ENCODE measurements at regions of chr22 and their contacts with region 1.

Region 1: GRCh38 chr22:30089655-30089974 is 9.4 kb downstream of the HORMAD2 start:
- DNase-seq: no peak
- ATAC-seq: no peak
- H3K4me3 ChIP-seq: no peak overlapping the region
- H3K27ac ChIP-seq: no peak overlapping the region
- H3K4me1 ChIP-seq: no peaks in the 10 kb centered on the region
- H3K27me3 ChIP-seq: no peaks in the 10 kb centered on the region
- CTCF ChIP-seq: no peak
- EP300 ChIP-seq: no peak
- POLR2A ChIP-seq: no peak
- RAD21 ChIP-seq: no peak

Region 2: GRCh38 chr22:29587938-29588699 is 501.5 kb before region 1 on chr22:
- CTCF ChIA-PET with region 1: interaction called, 14 read pairs
- POLR2A ChIA-PET with region 1: no interaction called
- RAD21 ChIA-PET with region 1: interaction called, 7 read pairs
- SMC1A ChIA-PET with region 1: interaction called, 4 read pairs
- in situ Hi-C with region 1: no loop called
- intact Hi-C with region 1: loop called (anchors 1 kb)
- DNase-seq: no peak
- ATAC-seq: peak; percentile 19; the same call in 1 of the 3 replicates
- H3K4me3 ChIP-seq: no peak overlapping the region
- H3K27ac ChIP-seq: no peak overlapping the region
- H3K4me1 ChIP-seq: no peaks in the 10 kb centered on the region
- H3K27me3 ChIP-seq: no peaks in the 10 kb centered on the region
- CTCF ChIP-seq: no peak
- EP300 ChIP-seq: no peak
- POLR2A ChIP-seq: no peak
- RAD21 ChIP-seq: no peak

Region 3: DNA sequence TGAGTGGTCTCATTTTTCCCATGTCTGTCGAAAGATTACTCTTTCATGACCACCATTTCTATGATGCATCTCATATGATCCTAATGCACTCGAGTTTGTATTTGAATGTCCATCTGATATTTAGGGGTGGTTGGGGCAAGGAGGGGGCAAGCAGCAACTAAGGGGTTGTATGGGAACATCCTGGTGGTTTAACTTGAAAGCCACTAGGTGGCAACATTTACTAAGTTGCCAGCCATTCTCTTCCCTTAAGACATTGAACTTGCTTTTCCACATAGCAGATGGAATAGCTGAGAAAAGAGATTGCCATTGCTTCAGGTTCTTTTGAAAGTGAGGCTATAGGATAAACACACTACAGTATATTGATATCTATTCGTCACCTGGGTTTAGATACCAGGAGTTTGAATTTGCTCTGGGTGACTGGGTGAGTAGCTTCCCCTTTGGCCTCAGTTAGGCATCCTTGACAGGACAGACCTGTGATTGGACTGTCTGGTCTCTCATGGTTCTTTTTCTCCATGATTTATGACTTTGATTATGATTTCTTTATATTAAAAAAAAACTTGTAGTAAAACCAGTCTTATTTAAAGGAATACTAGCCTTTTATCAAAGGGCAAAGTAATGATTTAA is 453.8 kb before region 1 on chr22:
- CTCF ChIA-PET with region 1: interaction called, 24 read pairs
- POLR2A ChIA-PET with region 1: no interaction called
- RAD21 ChIA-PET with region 1: interaction called, 23 read pairs
- SMC1A ChIA-PET with region 1: interaction called, 16 read pairs
- in situ Hi-C with region 1: no loop called
- intact Hi-C with region 1: loop called (anchors 1 kb)
- DNase-seq: peak; percentile 23
- ATAC-seq: peak; percentile 78
- H3K4me3 ChIP-seq: no peak overlapping the region
- H3K27ac ChIP-seq: no peak overlapping the region
- H3K4me1 ChIP-seq: peaks cover 11% of the 10 kb centered on the region
- H3K27me3 ChIP-seq: no peaks in the 10 kb centered on the region
- CTCF ChIP-seq: peak; percentile 62 to 79 (median 70)
- EP300 ChIP-seq: no peak
- POLR2A ChIP-seq: no peak
- RAD21 ChIP-seq: peak; percentile 72

Region 4: GRCh38 chr22:29689880-29690213 is 399.8 kb before region 1 on chr22:
- CTCF ChIA-PET with region 1: interaction called, 13 read pairs
- POLR2A ChIA-PET with region 1: no interaction called
- RAD21 ChIA-PET with region 1: interaction called, 12 read pairs
- SMC1A ChIA-PET with region 1: interaction called, 13 read pairs
- in situ Hi-C with region 1: no loop called
- intact Hi-C with region 1: loop called (anchors 10 kb)
- DNase-seq: no peak
- ATAC-seq: peak; percentile 63
- H3K4me3 ChIP-seq: no peak overlapping the region
- H3K27ac ChIP-seq: no peak overlapping the region
- H3K4me1 ChIP-seq: no peaks in the 10 kb centered on the region
- H3K27me3 ChIP-seq: no peaks in the 10 kb centered on the region
- CTCF ChIP-seq: peak; percentile 61 to 69 (median 67); a peak in 5 of 6 replicates
- EP300 ChIP-seq: no peak
- POLR2A ChIP-seq: no peak
- RAD21 ChIP-seq: peak; percentile 55